Activated CD4-positive, alpha-beta T cell treated with anti-CD3 and anti-CD28 coated beads, Interleukin-2, amount 10 ng/mL, durations not matched to agents 24 days and 14 days (primary cell): ENCODE measurements at regions of chr3 and their contacts with region 1.

Region 1: GRCh38 chr3:100400780-100401673 is at the starts of genes LNP1 and TOMM70:
- DNase-seq: peak; percentile 98
- H3K4me3 Mint-ChIP-seq: peak within 1 kb of the TSS; percentile 93
- H3K27ac Mint-ChIP-seq: peak within 1 kb of the TSS; percentile 98
- H3K4me1 Mint-ChIP-seq: peaks cover 36% of the 10 kb centered on the region
- H3K27me3 Mint-ChIP-seq: no peaks in the 10 kb centered on the region
- total RNA-seq, gene LNP1: 2.1 and 2.6 TPM in 2 replicates
- total RNA-seq, gene TOMM70: 57.4 and 61.5 TPM in 2 replicates

Region 2: GRCh38 chr3:100073899-100074307 is 327.1 kb before region 1 on chr3:
- intact Hi-C with region 1: loop called (anchors 5 kb)
- DNase-seq: peak; percentile 79
- H3K4me3 Mint-ChIP-seq: peak overlapping the region; percentile 79
- H3K27ac Mint-ChIP-seq: peak overlapping the region; percentile 92
- H3K4me1 Mint-ChIP-seq: peaks cover 60% of the 10 kb centered on the region
- H3K27me3 Mint-ChIP-seq: no peaks in the 10 kb centered on the region

Region 3: GRCh38 chr3:100316641-100317069 is 84.4 kb before region 1 on chr3:
- intact Hi-C with region 1: loop called (anchors 5 kb)
- DNase-seq: peak; percentile 86
- H3K4me3 Mint-ChIP-seq: peak overlapping the region; percentile 40
- H3K27ac Mint-ChIP-seq: peak overlapping the region; percentile 55
- H3K4me1 Mint-ChIP-seq: peaks cover 11% of the 10 kb centered on the region
- H3K27me3 Mint-ChIP-seq: no peaks in the 10 kb centered on the region

Region 4: DNA sequence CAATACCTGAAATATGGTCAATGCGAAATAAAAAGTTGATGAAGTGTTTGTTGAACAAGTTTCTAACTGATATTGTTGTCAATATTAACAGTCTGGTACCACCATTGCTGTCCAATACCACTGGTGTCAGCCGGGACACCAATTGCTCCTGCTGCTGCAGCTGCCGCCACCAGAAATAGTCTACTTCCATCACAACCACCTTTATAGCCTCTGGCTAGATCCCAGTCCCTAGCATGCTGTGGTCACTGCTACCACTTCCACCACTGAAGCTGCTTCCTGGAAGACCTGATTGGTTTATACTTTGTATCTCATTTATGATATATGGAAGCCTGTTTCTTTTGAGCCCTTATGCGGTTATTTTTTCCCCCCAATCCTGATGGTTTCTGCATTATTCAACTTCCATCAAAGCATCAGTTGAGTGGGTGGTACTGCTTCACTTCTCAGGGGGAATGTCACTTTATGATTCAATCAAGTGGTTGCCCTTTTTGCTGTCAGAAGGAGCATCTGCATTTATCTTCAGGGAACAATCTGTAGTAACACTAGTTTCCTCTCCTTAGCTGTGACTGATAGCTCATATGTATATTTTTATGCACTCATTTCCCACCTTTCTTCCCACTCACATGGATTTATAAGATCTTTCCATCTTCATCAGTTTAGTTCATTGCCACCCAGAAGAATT is 12.0 kb after region 1 on chr3:
- intact Hi-C with region 1: no loop called
- DNase-seq: no peak
- H3K4me3 Mint-ChIP-seq: no peak overlapping the region
- H3K27ac Mint-ChIP-seq: no peak overlapping the region
- H3K4me1 Mint-ChIP-seq: no peaks in the 10 kb centered on the region
- H3K27me3 Mint-ChIP-seq: no peaks in the 10 kb centered on the region

Region 5: GRCh38 chr3:100427699-100428098 is 26.7 kb after region 1 on chr3:
- intact Hi-C with region 1: no loop called
- DNase-seq: no peak
- H3K4me3 Mint-ChIP-seq: no peak overlapping the region
- H3K27ac Mint-ChIP-seq: no peak overlapping the region
- H3K4me1 Mint-ChIP-seq: no peaks in the 10 kb centered on the region
- H3K27me3 Mint-ChIP-seq: peaks cover 12% of the 10 kb centered on the region

Region 6: GRCh38 chr3:100492059-100493006 is 91.3 kb after region 1 on chr3 and contains the start of gene TMEM45A:
- intact Hi-C with region 1: loop called (anchors 1 kb)
- DNase-seq: peak; percentile 93
- H3K4me3 Mint-ChIP-seq: peak within 1 kb of the TSS; percentile 89
- H3K27ac Mint-ChIP-seq: peak within 1 kb of the TSS; percentile 31
- H3K4me1 Mint-ChIP-seq: peaks cover 7% of the 10 kb centered on the region
- H3K27me3 Mint-ChIP-seq: peaks cover 29% of the 10 kb centered on the region
- total RNA-seq, gene TMEM45A: 0.26 TPM in 1 of 2 replicates, not detected in the other

Region 7: DNA sequence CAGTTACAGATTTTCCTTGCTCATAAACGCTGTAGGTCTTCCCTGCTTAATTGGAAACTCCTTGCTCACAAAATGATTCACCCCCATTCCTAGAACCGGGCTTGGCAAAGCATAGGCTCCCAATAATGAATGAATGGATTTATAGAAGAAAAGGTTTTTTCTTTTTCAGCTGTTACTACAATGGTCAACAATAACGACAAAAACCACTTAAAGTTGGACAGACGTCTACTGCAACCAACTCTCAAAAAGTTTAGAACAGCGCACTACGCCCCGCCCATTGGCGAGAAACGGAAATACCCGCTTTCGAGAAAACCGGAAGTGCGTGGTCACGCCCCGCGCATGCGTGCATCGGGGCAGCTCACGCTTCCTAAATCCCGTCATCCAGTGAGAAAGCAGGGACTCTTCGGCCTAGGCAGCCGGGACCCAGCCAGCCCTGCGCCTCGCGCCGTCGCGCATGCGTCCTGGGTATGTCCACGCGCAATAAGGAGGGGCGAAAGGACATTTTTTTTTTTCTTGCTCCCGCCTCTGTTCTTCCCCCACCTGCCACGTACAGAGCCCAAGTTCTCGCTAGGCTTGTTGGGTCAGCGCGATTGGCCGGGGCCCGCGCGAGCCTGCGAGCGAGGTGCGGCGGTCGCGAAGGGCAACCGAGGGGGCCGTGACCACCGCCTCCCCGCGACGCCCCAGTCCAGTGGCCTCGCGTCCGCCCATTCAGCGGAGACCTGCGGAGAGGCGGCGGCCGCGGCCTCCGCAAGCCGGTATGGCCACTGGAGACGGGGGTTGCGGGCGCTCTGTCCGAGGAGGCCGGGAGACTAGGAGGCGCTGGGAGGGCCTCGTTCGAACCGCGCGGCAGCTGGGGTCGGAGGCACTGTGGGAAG is 308.2 kb after region 1 on chr3 and contains the start of gene TFG:
- intact Hi-C with region 1: loop called (anchors 1 kb)
- DNase-seq: peak; percentile 100
- H3K4me3 Mint-ChIP-seq: peak within 1 kb of the TSS; percentile 88
- H3K27ac Mint-ChIP-seq: peak within 1 kb of the TSS; percentile 94
- H3K4me1 Mint-ChIP-seq: peaks cover 33% of the 10 kb centered on the region
- H3K27me3 Mint-ChIP-seq: no peaks in the 10 kb centered on the region
- total RNA-seq, gene TFG: 71.5 and 72.2 TPM in 2 replicates

Region 8: DNA sequence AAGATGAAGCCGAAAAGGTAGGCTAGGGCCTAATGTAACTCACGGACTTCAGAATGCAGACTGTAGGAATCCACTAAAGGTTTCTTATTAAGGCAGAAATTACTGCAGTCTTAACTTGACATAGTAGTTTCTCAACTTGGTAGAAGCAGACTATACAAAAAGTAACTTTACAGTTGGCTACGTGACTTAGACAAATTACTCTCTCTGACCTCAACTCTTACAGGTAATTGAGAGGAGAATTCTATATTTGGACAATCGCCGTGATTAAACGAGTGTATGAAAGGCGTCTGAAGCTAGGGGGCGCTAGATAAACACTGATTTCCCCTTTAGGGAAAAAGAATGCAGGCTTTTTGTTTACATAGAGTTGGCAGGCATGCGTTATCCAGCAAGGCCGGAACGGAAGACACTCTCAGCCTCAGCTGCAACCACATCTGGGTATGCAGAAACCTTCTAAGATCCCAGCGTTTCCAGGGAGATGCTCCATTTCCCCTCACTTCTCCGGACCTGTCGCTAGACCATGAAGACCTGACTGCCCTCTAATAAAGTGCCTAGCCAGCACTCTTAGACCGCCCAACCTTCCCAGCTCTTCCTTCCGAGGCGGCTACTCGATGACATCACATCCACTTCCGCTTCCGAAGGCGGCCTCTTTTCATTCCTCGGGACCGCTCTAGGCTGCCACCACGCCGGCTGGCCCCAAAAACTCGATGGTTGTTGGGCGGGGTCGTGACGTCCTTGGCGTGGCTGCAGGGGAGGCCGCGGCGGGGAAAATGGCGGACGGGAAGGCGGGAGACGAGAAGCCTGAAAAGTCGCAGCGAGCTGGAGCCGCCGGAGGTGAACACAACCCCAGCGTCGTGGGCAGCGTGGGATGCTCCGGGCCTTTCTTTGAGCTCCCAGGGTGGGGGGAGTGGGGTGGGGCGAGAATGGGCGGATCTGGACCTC is 1172.7 kb after region 1 on chr3 and contains the start of gene PCNP:
- intact Hi-C with region 1: loop called (anchors 5 kb)
- DNase-seq: peak; percentile 100
- H3K4me3 Mint-ChIP-seq: peak within 1 kb of the TSS; percentile 94
- H3K27ac Mint-ChIP-seq: peak within 1 kb of the TSS; percentile 95
- H3K4me1 Mint-ChIP-seq: peaks cover 46% of the 10 kb centered on the region
- H3K27me3 Mint-ChIP-seq: no peaks in the 10 kb centered on the region
- total RNA-seq, gene PCNP: 190 and 205 TPM in 2 replicates